ENCODE measurements at regions of chrX and their contacts with region 1.

Region 1: GRCh38 chrX:47093248-47093647 is 15.0 kb downstream of the RGN start:
- DNase-seq: no peak
- ATAC-seq: peak; percentile 51; the same call in 2 of the 3 replicates
- H3K4me3 ChIP-seq: no peak overlapping the region
- H3K27ac ChIP-seq: no peak overlapping the region
- H3K4me1 ChIP-seq: no peaks in the 10 kb centered on the region
- H3K27me3 ChIP-seq: no peaks in the 10 kb centered on the region
- CTCF ChIP-seq: peak; percentile 37 to 51 (median 49); a peak in 5 of 6 replicates
- EP300 ChIP-seq: no peak
- POLR2A ChIP-seq: no peak
- RAD21 ChIP-seq: peak; percentile 57

Region 2: GRCh38 chrX:46803140-46803539 is 290.1 kb before region 1 on chrX:
- CTCF ChIA-PET with region 1: no interaction called
- POLR2A ChIA-PET with region 1: no interaction called
- RAD21 ChIA-PET with region 1: no interaction called
- SMC1A ChIA-PET with region 1: no interaction called
- in situ Hi-C with region 1: no loop called
- intact Hi-C with region 1: loop called (anchors 10 kb)
- DNase-seq: no peak
- ATAC-seq: peak; percentile 53
- H3K4me3 ChIP-seq: no peak overlapping the region
- H3K27ac ChIP-seq: no peak overlapping the region
- H3K4me1 ChIP-seq: no peaks in the 10 kb centered on the region
- H3K27me3 ChIP-seq: no peaks in the 10 kb centered on the region; a peak in 1 of 4 replicates
- CTCF ChIP-seq: peak; percentile 27 to 37 (median 34); a peak in 4 of 6 replicates
- EP300 ChIP-seq: no peak
- POLR2A ChIP-seq: no peak
- RAD21 ChIP-seq: peak; percentile 38; the same call in 1 of the 2 replicates

Region 3: DNA sequence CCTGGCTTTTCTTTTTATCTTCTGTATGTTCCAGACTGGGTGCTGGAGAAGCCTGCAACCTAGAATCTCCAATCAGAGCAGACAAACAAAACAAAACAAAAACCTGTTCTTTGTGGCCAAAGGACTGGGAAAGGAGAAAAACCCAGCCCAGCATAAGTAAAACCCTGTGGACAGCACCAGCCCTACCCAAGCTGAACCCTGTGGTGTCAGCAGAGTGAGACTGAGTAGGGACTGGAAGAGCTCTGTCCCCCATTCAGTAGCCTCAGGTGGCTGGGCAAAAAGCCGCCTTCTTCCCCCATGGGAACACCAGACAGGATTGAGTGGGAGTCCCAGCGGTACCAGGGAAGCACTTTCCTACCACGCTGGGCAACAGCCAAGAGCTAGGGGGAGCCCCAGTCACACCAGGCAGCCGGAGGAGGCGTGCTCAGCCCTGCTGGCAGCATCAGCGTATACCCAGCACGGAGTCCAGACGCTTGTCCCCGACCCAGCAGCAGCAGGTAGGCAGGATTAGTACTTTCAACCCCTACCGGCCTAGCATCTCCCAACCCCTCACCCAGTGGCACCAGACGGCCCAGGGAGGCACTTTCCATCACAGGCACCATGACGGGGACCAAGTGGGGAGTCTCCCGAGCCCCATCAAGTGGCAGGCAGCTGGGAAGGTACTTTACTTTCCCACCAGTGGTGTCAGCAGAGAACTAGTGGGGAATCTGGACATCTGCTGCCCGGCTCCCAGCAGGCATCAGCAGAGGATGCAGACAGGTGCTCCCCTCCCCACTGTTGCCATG is 189.6 kb before region 1 on chrX:
- CTCF ChIA-PET with region 1: interaction called, 7 read pairs
- POLR2A ChIA-PET with region 1: no interaction called
- RAD21 ChIA-PET with region 1: interaction called, 3 read pairs
- SMC1A ChIA-PET with region 1: interaction called, 6 read pairs
- in situ Hi-C with region 1: no loop called
- intact Hi-C with region 1: loop called (anchors 5 kb)
- DNase-seq: peak; percentile 48
- ATAC-seq: peak; percentile 100
- H3K4me3 ChIP-seq: peak overlapping the region; percentile 33; the same call in 1 of the 2 replicates
- H3K27ac ChIP-seq: no peak overlapping the region
- H3K4me1 ChIP-seq: no peaks in the 10 kb centered on the region
- H3K27me3 ChIP-seq: no peaks in the 10 kb centered on the region
- CTCF ChIP-seq: peak; percentile 60 to 67 (median 66)
- EP300 ChIP-seq: no peak
- POLR2A ChIP-seq: no peak
- RAD21 ChIP-seq: peak; percentile 65

Region 4: DNA sequence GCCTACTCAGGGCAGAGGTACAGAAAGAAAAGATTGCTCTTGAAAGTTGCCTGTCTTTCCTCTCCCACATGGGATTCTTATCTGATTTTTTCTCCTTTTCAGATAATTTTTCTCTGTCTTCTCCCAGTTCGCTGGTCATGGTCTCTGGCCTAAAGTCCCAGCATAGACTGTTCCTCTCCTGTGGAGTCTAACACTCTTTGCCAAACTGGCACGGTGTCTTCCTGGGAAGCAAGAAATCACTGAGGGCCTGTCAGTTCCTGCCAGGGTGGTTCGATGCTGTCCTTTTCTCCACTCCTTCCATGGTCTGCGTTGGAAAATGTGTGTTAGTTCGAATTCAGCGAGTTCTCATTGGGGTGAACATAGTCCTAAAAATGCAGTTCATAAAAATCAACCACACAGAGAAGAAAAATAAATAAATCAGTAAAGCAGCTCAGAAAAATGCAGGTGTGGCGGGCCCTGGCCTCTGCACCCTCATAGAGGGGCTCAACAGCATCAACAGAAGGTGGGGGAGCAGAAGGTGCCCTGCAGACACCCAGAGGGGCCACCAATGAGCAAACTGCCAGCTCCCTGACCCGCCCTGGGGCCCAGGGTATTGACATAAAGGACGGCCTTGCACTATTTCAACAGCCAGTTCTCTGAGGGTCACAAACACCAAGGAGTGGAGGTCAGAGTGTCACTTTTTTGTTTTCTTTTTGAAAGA is 12.9 kb before region 1 on chrX:
- CTCF ChIA-PET with region 1: interaction called, 12 read pairs
- POLR2A ChIA-PET with region 1: no interaction called
- RAD21 ChIA-PET with region 1: no interaction called
- SMC1A ChIA-PET with region 1: no interaction called
- in situ Hi-C with region 1: no loop called
- intact Hi-C with region 1: no loop called
- DNase-seq: no peak
- ATAC-seq: no peak
- H3K4me3 ChIP-seq: no peak overlapping the region
- H3K27ac ChIP-seq: no peak overlapping the region
- H3K4me1 ChIP-seq: no peaks in the 10 kb centered on the region
- H3K27me3 ChIP-seq: no peaks in the 10 kb centered on the region; a peak in 1 of 4 replicates
- CTCF ChIP-seq: no peak
- EP300 ChIP-seq: no peak
- POLR2A ChIP-seq: no peak
- RAD21 ChIP-seq: no peak

Region 5: DNA sequence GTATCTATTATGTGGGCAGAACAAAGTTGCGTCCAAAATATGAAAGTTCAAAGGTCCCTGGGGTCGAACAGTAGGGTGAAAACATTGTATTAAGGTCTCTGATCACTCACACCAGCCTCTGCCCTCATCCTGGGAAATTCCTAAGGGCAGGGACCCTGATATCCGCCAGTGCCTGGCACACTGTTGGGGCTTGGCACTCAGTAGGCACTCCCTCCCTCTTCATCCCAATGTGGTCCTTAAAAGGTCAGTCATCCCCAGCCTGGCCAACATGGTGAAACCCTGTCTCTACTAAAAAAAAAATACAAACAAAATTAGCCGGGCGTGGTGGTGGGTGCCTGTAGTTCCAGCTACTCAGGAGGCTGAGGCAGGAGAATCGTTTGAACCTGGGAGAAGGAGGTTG is 44.9 kb after region 1 on chrX:
- CTCF ChIA-PET with region 1: no interaction called
- POLR2A ChIA-PET with region 1: no interaction called
- RAD21 ChIA-PET with region 1: no interaction called
- SMC1A ChIA-PET with region 1: no interaction called
- in situ Hi-C with region 1: no loop called
- intact Hi-C with region 1: no loop called
- DNase-seq: no peak
- ATAC-seq: no peak
- H3K4me3 ChIP-seq: no peak overlapping the region
- H3K27ac ChIP-seq: no peak overlapping the region
- H3K4me1 ChIP-seq: no peaks in the 10 kb centered on the region
- H3K27me3 ChIP-seq: no peaks in the 10 kb centered on the region
- CTCF ChIP-seq: no peak
- EP300 ChIP-seq: no peak
- POLR2A ChIP-seq: no peak
- RAD21 ChIP-seq: no peak

Measured in GM12878 (cell line).